ENCODE measurements at regions of chr9 and their contacts with region 1.

Region 1: GRCh38 chr9:34646211-34647083 is at the start of gene GALT:
- DNase-seq: peak; percentile 98
- ATAC-seq: peak; percentile 88
- H3K4me3 Mint-ChIP-seq: peak within 1 kb of the TSS; percentile 92
- H3K27ac Mint-ChIP-seq: peak within 1 kb of the TSS; percentile 87
- H3K4me1 Mint-ChIP-seq: peaks cover 24% of the 10 kb centered on the region
- H3K27me3 Mint-ChIP-seq: no peaks in the 10 kb centered on the region
- total RNA-seq, gene GALT: 61.0 to 71.3 TPM

Region 2: DNA sequence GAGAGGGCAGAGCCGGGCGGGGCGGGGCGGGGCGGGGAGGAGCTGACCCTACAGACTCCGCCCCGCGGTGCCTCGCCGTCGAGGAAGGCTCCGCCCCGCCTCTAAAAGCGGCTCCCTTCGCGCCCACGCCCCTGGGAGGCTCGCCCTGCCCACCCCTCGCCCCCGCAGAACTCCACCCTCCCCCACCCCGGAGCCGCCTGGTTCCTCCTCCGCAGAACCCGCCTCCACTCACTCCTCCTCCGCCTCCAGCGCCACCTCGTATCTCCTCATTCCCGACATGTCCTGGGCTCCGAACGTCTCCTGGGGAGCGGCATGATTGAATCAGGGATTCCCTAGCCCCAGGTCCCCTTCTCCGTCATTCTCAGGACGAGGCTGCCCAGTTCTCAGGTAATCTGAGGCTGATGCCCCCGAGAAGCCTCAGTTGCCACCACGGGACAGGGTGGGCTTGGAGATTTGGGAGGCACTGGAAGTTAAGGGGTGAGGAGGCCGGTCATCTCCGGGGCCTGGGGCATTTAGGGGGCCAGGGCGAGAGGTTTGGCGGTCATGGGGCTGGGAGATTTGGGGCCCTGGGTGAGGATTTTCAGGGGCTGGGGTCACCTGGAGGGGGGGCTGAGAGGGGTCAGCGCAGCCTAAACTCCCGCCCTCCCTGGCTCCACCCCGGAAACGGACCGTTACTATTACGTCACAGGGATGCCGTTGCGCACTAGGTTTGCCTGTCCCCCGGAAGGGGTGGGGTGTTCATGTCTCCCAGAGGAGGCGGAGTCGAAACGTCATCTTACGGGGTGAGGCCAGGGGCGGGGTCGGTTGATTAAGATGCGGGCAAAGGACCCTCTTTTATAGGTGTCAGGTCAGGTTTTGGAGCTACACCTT is 19.2 kb after region 1 on chr9:
- CTCF ChIA-PET with region 1: interaction called, 124 read pairs
- DNase-seq: peak; percentile 94
- ATAC-seq: peak; percentile 83
- H3K4me3 Mint-ChIP-seq: peak overlapping the region; percentile 80
- H3K27ac Mint-ChIP-seq: peak overlapping the region; percentile 90
- H3K4me1 Mint-ChIP-seq: peaks cover 29% of the 10 kb centered on the region
- H3K27me3 Mint-ChIP-seq: no peaks in the 10 kb centered on the region

Region 3: GRCh38 chr9:34796924-34797323 is 150.5 kb after region 1 on chr9:
- CTCF ChIA-PET with region 1: no interaction called
- DNase-seq: no peak
- ATAC-seq: no peak
- H3K4me3 Mint-ChIP-seq: no peak overlapping the region
- H3K27ac Mint-ChIP-seq: no peak overlapping the region
- H3K4me1 Mint-ChIP-seq: no peaks in the 10 kb centered on the region
- H3K27me3 Mint-ChIP-seq: peaks cover 61% of the 10 kb centered on the region